Activated CD4-positive, alpha-beta memory T cell treated with anti-CD3 and anti-CD28 coated beads for 36 hours (primary cell): ENCODE measurements at regions of chr2 and their contacts with region 1.

Region 1: DNA sequence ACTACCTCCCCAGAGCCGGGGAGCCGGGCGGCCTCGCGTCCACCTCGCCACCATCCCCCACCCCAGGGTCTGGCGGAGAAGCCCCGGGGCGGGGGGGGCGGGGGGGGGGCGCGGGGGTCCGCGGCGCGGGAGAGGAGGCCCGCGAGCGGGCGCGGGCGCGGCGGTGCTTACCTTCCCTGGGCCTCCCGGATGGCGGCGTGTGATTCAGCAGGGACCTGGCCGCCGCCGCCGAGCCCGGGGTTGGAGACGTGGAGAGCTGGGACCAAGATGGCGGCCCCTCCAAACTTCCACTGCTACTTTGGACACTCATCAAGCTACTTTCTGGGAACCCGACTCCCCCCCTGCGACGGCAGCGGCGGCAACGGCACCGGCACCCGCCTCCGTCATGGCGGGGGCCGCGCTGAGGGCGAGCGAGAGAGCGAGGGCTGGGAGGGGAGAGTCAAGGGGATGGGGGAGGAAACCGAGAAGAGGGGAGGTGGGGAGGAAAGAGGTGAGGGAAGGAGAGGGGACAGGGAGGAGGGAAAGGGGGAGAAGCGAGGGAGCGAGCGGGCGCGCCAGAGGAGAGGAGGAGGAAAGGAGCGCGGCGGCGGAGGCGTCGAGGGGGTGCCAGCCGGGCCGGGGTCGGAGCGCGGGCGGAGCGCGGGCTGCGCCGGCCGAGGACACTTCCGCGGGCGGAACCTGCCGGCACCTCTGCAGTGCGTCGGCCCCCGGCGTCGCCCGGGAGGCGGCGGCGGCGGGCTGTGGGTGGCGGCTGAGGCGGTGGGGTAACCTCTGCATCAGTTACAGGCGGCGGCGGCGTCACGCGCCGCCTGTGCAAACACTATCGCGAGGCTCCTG is at the start of gene TLK1:
- DNase-seq: peak; percentile 81
- H3K4me3 Mint-ChIP-seq: peak within 1 kb of the TSS; percentile 92
- H3K27ac Mint-ChIP-seq: peak within 1 kb of the TSS; percentile 88
- H3K4me1 Mint-ChIP-seq: peaks cover 56% of the 10 kb centered on the region
- H3K27me3 Mint-ChIP-seq: no peaks in the 10 kb centered on the region
- total RNA-seq, gene TLK1: 59.2 to 64.5 TPM

Region 2: DNA sequence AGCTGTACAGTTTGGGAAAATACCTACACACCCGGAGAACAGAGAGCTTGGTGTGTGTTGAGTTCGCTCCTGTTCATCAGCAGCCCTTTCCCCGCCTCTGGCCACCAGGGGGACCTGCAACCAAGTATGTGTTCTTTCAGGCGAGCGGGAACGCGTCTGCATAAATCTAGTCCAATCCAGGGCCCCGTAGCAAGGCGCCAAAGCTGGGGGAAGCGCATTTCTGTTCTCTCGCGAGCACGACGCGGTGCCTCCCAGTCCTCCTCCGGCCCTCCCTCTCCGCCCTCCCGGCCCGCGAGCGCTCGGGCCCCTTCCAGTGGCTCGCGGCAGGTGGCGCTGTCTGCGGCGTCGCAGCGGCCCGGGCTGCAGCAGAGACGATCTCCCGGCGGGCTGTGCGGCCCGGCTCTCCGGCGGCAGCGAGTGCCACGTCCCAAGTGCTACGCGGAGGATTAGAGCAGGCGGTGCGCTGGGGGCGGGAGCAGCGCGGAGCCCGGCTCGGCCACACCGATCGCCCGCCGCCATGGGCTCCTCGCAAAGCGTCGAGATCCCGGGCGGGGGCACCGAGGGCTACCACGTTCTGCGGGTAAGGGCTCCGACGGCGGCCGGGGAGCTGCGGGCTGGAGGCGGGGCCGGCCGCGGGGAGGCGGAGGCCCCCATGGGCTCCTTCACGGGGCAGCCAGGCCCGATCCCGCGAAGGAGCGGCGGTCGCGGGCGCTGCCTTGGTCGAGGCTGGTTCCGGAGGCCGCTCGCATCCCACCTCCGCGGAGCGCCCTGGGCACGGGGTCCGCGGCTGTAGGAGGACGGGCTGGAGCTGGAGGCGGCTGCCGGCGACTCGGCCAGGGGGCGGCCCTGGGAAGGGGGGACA is 231.3 kb before region 1 on chr2 and contains the start of gene GORASP2:
- CTCF ChIA-PET with region 1: interaction called, 12 read pairs
- POLR2A ChIA-PET with region 1: no interaction called
- intact Hi-C with region 1: loop called (anchors 1 kb)
- DNase-seq: peak; percentile 99
- H3K4me3 Mint-ChIP-seq: peak within 1 kb of the TSS; percentile 97
- H3K27ac Mint-ChIP-seq: peak within 1 kb of the TSS; percentile 96
- H3K4me1 Mint-ChIP-seq: peaks cover 34% of the 10 kb centered on the region
- H3K27me3 Mint-ChIP-seq: no peaks in the 10 kb centered on the region
- total RNA-seq, gene GORASP2: 64.5 to 73.7 TPM

Region 3: GRCh38 chr2:171086352-171087290 is 73.7 kb before region 1 on chr2:
- CTCF ChIA-PET with region 1: interaction called, 20 read pairs
- POLR2A ChIA-PET with region 1: no interaction called
- intact Hi-C with region 1: loop called (anchors 2 kb)
- DNase-seq: peak; percentile 66
- H3K4me3 Mint-ChIP-seq: peak overlapping the region; percentile 64
- H3K27ac Mint-ChIP-seq: peak overlapping the region; percentile 43
- H3K4me1 Mint-ChIP-seq: peaks cover 58% of the 10 kb centered on the region
- H3K27me3 Mint-ChIP-seq: no peaks in the 10 kb centered on the region

Region 4: DNA sequence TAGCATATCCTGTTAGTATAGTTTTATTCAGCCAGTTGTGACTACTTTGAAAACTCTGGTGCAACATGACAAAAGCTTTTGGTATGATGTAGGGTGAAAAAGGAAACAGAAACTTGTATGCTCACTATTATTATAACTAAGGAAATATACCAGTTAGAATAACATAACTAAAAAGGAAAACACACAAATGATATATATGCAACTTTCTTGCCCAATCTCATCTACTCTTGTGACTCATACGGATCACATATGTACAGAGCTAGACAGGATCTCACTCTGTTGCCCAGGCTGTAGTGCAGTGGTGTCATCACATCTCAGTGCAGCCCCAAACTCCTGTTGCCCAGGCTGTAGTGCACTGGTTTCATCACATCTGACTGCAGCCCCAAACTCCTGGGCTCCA is 12.8 kb after region 1 on chr2:
- CTCF ChIA-PET with region 1: interaction called, 4 read pairs
- POLR2A ChIA-PET with region 1: no interaction called
- intact Hi-C with region 1: loop called (anchors 1 kb)
- DNase-seq: peak; percentile 53
- H3K4me3 Mint-ChIP-seq: no peak overlapping the region
- H3K27ac Mint-ChIP-seq: no peak overlapping the region
- H3K4me1 Mint-ChIP-seq: peaks cover 17% of the 10 kb centered on the region
- H3K27me3 Mint-ChIP-seq: no peaks in the 10 kb centered on the region

Region 5: DNA sequence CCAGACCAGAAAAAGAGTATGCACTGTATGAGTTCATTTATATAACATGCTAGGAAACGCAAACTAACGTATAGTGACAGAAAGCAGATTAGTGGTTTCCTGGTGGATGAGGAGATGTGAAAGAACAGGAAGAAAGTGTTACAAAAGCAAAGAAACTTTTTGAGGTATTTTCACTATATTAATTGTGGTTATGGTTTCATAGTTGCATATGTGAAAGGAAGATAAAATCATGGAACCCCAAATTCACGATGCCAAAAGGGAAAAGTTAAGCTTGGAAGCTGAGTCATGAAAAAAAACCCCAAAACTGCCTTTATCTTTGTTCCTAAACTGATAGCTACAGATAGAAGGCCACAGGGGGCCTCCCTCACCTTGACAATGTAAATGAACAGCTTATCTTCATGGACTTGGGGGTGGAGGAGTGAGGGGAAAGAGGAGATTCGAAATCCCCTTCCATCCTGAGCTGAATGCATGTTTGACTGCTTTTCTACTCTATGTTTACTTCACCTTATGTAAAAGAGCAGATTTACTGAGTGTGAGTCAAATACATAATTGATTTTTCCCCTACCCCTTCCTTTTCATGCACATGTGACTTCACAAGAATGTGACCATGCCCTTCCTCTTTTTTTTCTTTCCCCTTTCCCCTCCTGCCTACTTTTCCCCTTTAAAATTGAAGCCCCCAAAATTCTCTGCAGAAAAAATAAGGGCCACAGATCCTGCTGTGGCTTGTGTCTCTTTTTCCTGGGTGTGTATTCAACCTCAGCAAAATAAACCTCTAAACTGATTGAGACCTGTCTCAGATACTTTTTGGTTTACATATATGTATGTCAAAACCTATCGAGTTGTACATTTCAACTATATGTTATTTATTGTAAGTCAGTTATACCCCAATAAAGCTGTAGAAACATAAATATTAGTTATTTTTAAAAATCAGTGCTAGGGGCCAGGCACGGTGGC is 100.4 kb after region 1 on chr2:
- CTCF ChIA-PET with region 1: no interaction called
- POLR2A ChIA-PET with region 1: interaction called, 10 read pairs
- intact Hi-C with region 1: loop called (anchors 1 kb)
- DNase-seq: peak; percentile 50
- H3K4me3 Mint-ChIP-seq: no peak overlapping the region
- H3K27ac Mint-ChIP-seq: peak overlapping the region; percentile 19
- H3K4me1 Mint-ChIP-seq: peaks cover 31% of the 10 kb centered on the region
- H3K27me3 Mint-ChIP-seq: no peaks in the 10 kb centered on the region

Region 6: DNA sequence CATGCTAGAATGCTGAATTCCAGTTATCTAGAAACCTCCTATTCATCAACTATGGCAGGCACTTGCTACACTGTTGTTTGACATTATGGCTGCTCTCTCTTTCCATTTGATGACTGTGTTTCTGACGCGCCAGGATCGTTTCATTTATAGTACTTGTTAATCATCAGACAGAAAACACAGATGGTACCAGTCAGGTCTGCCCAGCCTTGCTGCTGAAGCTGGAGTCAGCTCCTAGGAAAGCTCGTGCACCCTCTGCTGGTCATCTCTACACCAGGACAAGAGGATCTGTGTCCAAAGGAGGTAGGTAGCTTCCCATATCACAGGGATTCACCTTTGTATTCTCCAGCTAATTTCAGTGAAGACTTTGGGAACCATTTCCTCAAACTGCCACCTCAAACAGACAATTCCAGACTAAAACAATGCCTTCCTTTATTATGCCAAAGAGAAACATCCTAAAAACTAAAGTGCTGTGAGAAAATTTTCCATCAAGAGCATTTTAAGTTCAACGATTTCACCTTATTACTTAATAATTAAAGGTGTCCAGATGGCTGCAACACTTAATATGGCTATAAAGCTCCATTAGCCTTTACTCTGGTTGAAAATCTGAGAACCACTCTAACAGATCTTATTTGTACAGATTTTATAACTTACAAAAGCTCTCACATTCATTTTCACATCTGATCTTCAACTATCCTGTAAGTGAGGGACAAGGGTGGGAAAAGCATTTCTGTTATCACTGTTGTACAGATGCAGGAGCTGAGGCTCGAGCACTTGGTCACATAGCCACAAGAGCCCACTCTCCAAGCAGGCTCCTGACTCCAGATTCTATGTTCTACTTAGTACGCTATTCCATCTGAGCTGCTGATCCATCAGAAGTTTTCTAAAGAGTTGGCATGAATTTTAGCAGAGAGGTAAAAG is 255.9 kb after region 1 on chr2:
- CTCF ChIA-PET with region 1: interaction called, 15 read pairs
- POLR2A ChIA-PET with region 1: interaction called, 5 read pairs
- intact Hi-C with region 1: loop called (anchors 1 kb)
- DNase-seq: peak; percentile 91
- H3K4me3 Mint-ChIP-seq: no peak overlapping the region
- H3K27ac Mint-ChIP-seq: peak overlapping the region; percentile 88
- H3K4me1 Mint-ChIP-seq: peaks cover 33% of the 10 kb centered on the region
- H3K27me3 Mint-ChIP-seq: no peaks in the 10 kb centered on the region

Region 7: GRCh38 chr2:171460537-171460936 is 300.2 kb after region 1 on chr2:
- CTCF ChIA-PET with region 1: no interaction called
- POLR2A ChIA-PET with region 1: no interaction called
- intact Hi-C with region 1: no loop called
- DNase-seq: no peak
- H3K4me3 Mint-ChIP-seq: no peak overlapping the region
- H3K27ac Mint-ChIP-seq: no peak overlapping the region
- H3K4me1 Mint-ChIP-seq: no peaks in the 10 kb centered on the region
- H3K27me3 Mint-ChIP-seq: no peaks in the 10 kb centered on the region